A673 (cell line): ENCODE measurements at regions of chr17 and their contacts with region 1.

Region 1: GRCh38 chr17:1122533-1123392 is 57.0 kb downstream of the ABR start:
- DNase-seq: peak; percentile 72
- H3K4me3 ChIP-seq: no peak overlapping the region
- H3K27ac ChIP-seq: no peak overlapping the region
- H3K4me1 ChIP-seq: peaks cover 3% of the 10 kb centered on the region
- H3K27me3 ChIP-seq: no peaks in the 10 kb centered on the region
- CTCF ChIP-seq: peak; percentile 91

Region 2: GRCh38 chr17:1186923-1187771 is 64.4 kb after region 1 on chr17:
- CTCF ChIA-PET with region 1: interaction called, 14 read pairs
- POLR2A ChIA-PET with region 1: no interaction called
- intact Hi-C with region 1: loop called (anchors 1 kb)
- DNase-seq: peak; percentile 87
- H3K4me3 ChIP-seq: no peak overlapping the region
- H3K27ac ChIP-seq: no peak overlapping the region
- H3K4me1 ChIP-seq: no peaks in the 10 kb centered on the region
- H3K27me3 ChIP-seq: peaks cover 3% of the 10 kb centered on the region
- CTCF ChIP-seq: peak; percentile 98